GM10248 (cell line): ENCODE measurements at regions of chr12 and their contacts with region 1.

Region 1: GRCh38 chr12:55073043-55074022 is 52.9 kb upstream of the OR9K2 start:
- DNase-seq: peak; percentile 58
- CTCF ChIP-seq: peak; percentile 89

Region 2: DNA sequence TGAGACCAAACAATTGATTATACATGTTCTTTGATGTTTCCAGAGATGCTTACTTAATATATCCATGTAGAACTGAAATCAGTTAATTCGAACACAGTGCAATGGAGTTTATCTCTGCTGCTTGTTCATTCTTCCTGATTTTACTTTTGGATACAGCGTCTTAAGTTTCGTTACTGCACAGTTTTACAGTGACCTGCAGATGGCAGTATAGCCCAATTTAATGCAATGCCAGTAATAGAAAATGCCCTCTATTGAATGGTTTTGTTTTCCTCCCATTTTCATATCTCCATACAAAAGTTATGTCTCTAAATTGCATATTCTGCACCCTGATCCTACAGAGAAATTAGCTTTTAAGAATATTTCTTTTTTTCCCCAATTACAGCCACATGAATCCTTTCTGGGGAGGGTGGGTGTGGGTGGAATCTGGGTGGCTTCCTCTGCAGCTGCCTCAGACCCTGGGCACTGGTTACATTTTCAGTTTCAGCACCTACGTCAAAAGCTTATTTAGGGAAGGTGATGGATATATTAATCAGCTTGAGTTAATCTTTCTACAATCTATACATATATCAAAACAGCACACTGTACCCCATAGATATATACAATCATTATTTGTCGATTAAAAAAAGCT is 324.0 kb before region 1 on chr12:
- CTCF ChIA-PET with region 1: interaction called, 120 read pairs
- POLR2A ChIA-PET with region 1: no interaction called
- DNase-seq: peak; percentile 56
- CTCF ChIP-seq: peak; percentile 86

Region 3: DNA sequence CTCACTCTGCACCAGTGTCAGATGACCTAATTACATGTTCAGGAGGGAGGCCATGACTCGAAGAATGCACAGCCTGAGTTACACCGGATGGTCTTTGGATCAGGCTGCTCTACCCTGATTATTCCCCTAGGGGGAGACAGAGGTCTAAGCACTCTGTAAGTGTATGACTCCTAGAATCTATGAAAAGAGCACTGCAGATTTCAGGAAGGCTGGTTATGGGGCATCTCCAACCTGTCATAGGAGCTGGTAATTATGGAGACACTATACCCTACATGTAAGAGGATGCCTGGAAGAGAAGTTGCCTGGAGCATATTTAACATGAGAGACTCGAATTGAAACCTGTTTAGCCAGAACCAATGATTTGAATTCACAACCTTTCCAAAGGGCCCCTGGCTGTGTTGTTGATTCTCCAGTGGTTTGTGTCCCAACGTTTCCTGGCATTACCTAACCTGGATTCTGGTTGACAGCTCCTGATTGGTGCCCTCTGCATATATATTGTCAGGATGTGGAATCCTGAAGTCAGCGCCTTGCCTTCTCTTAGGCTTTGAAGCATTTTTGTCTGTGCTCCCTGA is 219.3 kb before region 1 on chr12 and contains the start of gene MUCL1:
- CTCF ChIA-PET with region 1: interaction called, 14 read pairs
- POLR2A ChIA-PET with region 1: no interaction called
- DNase-seq: peak; percentile 46
- CTCF ChIP-seq: peak; percentile 83

Region 4: DNA sequence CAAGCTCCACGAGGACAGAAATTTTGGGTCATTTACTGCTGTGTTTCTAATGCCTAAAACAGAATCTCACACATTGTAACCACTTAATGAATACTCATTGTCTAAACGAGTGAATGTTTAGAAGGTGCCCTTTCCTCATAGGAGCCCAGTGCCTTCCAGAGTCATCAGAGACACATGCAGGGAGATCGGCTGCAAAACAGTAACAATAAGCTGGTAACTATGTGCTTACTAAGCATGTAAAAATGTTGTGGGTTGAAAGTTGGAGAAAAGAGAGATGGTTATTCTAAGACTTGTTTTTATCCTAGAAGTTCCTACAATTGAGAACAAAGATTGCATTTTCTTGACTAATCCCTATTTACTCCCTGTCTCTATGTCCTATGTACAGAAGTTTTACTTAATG is 96.2 kb before region 1 on chr12:
- CTCF ChIA-PET with region 1: interaction called, 60 read pairs
- POLR2A ChIA-PET with region 1: no interaction called
- DNase-seq: no peak
- CTCF ChIP-seq: no peak

Region 5: DNA sequence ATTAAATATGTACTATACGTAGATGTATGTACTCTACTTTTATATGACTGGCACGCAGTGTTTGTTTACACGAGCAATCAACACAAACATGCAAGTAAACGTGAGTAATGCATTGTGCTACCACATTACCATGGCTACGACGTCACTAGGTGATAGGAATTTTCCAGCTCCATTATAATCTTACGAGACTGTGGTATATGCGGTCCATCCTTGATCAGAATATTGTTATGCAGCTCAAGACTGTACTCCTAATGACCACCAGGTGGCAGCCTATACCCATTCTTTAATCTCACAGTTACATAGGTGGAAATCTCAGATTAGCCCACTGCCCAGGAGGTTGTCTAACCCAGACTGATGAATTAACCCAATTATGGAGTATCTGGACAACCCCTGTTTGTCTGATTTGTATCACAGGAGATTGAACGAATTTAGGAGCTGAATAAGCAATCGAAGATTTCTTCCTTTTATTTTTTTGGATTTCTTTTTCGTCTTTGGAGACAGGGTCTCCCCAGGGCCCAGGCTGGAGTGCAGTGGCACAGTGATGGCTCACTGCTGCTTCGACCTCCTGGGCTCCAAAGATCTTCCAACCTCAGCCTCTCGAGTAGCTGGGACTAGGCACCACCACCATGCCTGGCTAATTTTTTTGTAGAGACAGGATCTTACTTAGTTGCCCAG is 80.0 kb before region 1 on chr12:
- CTCF ChIA-PET with region 1: interaction called, 646 read pairs
- POLR2A ChIA-PET with region 1: interaction called, 4 read pairs
- DNase-seq: peak; percentile 64
- CTCF ChIP-seq: peak; percentile 58

Region 6: GRCh38 chr12:55049676-55050075 is 23.7 kb before region 1 on chr12:
- CTCF ChIA-PET with region 1: interaction called, 14 read pairs
- POLR2A ChIA-PET with region 1: no interaction called
- DNase-seq: no peak
- CTCF ChIP-seq: no peak